ENCODE measurements at regions of chrX and their contacts with region 1.

Region 1: GRCh38 chrX:16719334-16720084 is at the start of gene SYAP1:
- DNase-seq: peak; percentile 94 to 96
- H3K4me3 ChIP-seq: peak within 1 kb of the TSS; percentile 73
- H3K27ac ChIP-seq: peak within 1 kb of the TSS; percentile 98
- H3K4me1 ChIP-seq: 0 out of 2 replicates have a peak, but pooled peaks cover 6% of the 10 kb centered on the region
- H3K27me3 ChIP-seq: no peaks in the 10 kb centered on the region
- CTCF ChIP-seq: no peak
- total RNA-seq, gene SYAP1: 29.0 and 41.2 TPM in 2 replicates

Region 2: GRCh38 chrX:16771483-16772398 is 52.2 kb after region 1 on chrX:
- CTCF ChIA-PET with region 1: no interaction called
- POLR2A ChIA-PET with region 1: interaction called, 3 read pairs
- intact Hi-C with region 1: loop called (anchors 5 kb)
- DNase-seq: peak; percentile 39 to 82
- H3K4me3 ChIP-seq: peak overlapping the region; percentile 38; the same call in 1 of the 2 replicates
- H3K27ac ChIP-seq: peak overlapping the region; percentile 98
- H3K4me1 ChIP-seq: peaks cover 16% of the 10 kb centered on the region
- H3K27me3 ChIP-seq: no peaks in the 10 kb centered on the region
- CTCF ChIP-seq: no peak

Region 3: DNA sequence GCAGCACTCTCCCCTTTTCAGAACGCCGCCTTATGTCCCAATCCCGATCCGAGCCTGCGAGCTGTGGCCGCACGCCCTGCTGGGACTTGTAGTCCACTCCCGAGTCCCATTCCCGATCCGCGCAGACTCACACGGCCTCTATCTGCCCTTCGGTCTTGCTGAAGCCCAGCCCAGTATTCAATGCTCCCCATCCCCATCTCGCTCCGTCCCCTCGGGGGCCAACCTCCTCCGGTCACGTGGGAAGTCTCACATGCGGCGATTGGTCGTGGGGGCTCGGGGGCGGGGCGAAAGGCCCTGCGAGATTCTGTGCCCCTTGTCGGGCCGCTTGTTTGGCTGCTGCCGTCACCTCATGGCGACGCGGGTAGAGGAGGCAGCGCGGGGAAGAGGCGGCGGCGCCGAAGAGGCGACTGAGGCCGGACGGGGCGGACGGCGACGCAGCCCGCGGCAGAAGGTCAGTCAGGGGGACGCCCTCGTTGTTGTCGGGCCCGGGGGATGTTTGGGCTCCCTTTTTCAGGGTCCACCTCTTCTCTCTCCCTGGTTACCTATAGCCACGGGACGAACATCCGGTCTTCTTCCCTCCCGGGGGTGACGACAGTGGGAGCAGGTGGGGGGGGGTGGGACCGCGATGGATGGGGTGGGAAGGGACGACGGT is 66.8 kb after region 1 on chrX and contains the start of gene TXLNG:
- CTCF ChIA-PET with region 1: no interaction called
- POLR2A ChIA-PET with region 1: no interaction called
- intact Hi-C with region 1: loop called (anchors 2 kb)
- DNase-seq: peak; percentile 96 to 97
- H3K4me3 ChIP-seq: peak within 1 kb of the TSS; percentile 80
- H3K27ac ChIP-seq: peak within 1 kb of the TSS; percentile 63
- H3K4me1 ChIP-seq: 0 out of 2 replicates have a peak, but pooled peaks cover 5% of the 10 kb centered on the region
- H3K27me3 ChIP-seq: no peaks in the 10 kb centered on the region
- CTCF ChIP-seq: no peak
- total RNA-seq, gene TXLNG: 12.6 and 17.4 TPM in 2 replicates

Region 4: GRCh38 chrX:16931371-16931770 is 211.9 kb after region 1 on chrX:
- CTCF ChIA-PET with region 1: no interaction called
- POLR2A ChIA-PET with region 1: no interaction called
- intact Hi-C with region 1: no loop called
- DNase-seq: no peak
- H3K4me3 ChIP-seq: no peak overlapping the region
- H3K27ac ChIP-seq: no peak overlapping the region
- H3K4me1 ChIP-seq: no peaks in the 10 kb centered on the region
- H3K27me3 ChIP-seq: no peaks in the 10 kb centered on the region
- CTCF ChIP-seq: no peak

Region 5: GRCh38 chrX:17160971-17161370 is 441.5 kb after region 1 on chrX:
- CTCF ChIA-PET with region 1: no interaction called
- POLR2A ChIA-PET with region 1: no interaction called
- intact Hi-C with region 1: no loop called
- DNase-seq: peak in 1 of 2 experiments; percentile 38
- H3K4me3 ChIP-seq: no peak overlapping the region
- H3K27ac ChIP-seq: no peak overlapping the region
- H3K4me1 ChIP-seq: no peaks in the 10 kb centered on the region
- H3K27me3 ChIP-seq: no peaks in the 10 kb centered on the region
- CTCF ChIP-seq: peak; percentile 55

Region 6: GRCh38 chrX:17405225-17405969 is 685.9 kb after region 1 on chrX:
- CTCF ChIA-PET with region 1: no interaction called
- POLR2A ChIA-PET with region 1: interaction called, 16 read pairs
- intact Hi-C with region 1: no loop called
- DNase-seq: peak; percentile 59 to 94
- H3K4me3 ChIP-seq: no peak overlapping the region
- H3K27ac ChIP-seq: peak overlapping the region; percentile 77
- H3K4me1 ChIP-seq: peaks cover 39% of the 10 kb centered on the region
- H3K27me3 ChIP-seq: no peaks in the 10 kb centered on the region
- CTCF ChIP-seq: no peak